Right ventricle myocardium inferior (tissue), 1 donor: ENCODE measurements at regions of chr4 and their contacts with region 1.

Region 1: DNA sequence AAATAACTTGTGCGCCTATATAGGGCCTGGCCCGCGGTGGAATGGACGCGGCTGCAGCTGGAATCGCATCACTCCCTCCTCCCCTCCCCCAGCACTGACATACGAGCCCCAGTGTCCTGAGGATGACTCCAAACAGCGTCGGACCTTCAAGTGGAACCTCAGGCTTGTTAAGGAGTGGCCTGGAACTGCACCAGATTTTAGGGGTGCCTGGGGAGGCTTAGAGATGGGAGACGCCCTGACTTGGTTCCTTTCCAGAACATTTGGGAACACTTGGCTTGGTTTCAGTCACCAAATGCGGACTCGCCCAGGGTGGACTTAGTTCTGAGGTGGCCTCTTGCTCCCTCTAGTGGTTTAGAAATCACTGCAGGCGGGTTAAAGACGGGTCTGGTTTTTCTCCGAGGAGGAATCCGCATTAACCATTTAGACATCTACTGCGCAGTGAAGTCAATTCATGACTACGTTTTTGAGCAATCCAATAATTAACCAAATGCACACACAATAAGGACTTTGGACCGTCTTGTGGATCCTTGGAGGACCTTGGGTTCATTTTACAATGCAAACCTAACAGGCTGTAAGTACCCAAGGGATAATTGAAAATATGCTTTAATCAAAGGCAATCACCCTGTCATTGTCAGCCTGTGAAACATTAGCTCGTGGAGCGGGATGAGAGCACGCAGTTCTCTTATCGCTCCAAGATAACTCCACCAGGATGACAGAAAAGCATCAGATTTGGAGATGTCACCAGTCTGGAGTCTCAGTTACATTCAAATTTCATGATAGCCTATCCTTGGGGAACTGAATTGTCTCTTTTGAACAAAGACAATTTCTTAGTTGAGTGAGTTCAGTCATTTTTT is 11.2 kb upstream of the PDGFRA start:
- DNase-seq: peak; percentile 83
- ATAC-seq: peak; percentile 97

Region 2: DNA sequence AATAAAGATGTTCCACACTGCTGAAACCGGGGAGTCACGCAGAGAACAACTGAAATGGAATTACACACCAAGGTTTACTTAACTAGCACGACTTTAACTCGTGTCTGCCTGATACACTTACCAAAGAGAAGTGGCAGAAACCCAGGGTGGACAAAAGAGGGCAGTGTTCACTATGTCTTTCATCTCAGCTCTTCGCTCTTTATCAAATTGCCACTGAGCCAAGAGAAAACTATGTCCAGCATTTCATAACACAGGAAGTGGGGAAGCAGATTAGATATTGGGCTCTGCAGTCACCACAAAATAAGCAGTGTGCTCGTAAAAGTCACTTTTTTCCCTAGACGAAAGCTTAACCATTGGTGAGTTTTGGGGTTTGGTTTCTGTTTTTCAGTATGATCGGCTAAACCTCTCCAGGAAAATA is 309.2 kb before region 1 on chr4:
- intact Hi-C with region 1: loop called (anchors 5 kb)
- DNase-seq: no peak
- ATAC-seq: peak; percentile 91

Region 3: GRCh38 chr4:53929955-53930798 is 287.7 kb before region 1 on chr4:
- intact Hi-C with region 1: loop called (anchors 2 kb)
- DNase-seq: peak; percentile 69
- ATAC-seq: peak; percentile 92

Region 4: GRCh38 chr4:54064295-54065111 is 153.4 kb before region 1 on chr4 and contains the start of gene CHIC2:
- intact Hi-C with region 1: loop called (anchors 5 kb)
- DNase-seq: peak; percentile 98
- ATAC-seq: peak; percentile 90
- total RNA-seq, gene CHIC2: 10.1 TPM